Naive thymus-derived CD4-positive, alpha-beta T cell (primary cell): ENCODE measurements at regions of chr7 and their contacts with region 1.

Region 1: DNA sequence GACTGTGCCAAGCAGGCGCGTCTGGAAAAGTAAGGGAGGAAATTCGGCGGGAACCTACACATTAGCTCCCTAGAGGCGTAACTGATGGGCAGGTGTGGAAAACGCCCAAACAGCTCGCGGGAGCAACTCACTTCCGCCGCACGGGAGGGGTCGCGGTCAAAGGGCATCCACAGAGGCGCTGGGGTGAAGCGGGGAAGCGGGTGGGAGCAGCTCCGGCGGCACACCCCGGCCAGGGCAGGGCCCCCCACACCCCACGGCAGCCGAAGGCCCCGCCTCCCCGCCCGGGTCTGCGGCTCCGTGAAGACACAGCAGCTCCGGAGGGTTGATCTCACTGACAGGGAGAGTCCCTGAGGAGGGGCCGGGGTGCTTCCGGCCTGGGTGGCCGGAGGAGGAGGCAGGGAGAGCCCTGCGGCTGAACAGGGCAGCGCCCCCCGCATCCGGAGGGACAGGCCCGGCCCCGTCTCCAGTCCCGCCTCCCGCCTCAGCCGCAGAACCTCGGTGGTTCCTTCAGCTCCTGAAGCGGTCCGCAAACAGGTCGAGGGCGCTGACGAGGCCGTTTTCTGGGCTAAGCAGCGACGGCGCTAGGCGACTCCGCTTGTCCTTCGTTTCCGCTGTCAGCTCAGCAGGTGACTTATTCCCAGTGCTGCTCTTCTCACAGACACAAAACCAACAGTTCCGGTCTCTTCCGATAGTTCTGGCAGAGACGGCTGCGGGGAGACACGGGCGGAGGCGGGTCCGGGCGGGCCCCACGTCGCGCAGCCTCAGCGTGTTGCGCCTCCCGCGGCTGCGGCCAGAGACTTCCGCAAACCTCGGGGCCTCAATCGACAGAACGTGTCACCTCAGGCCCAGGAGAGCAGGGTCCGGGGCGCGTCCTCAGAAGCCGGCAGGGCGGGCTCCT is 276.1 kb downstream of the DNAJB6 start:
- DNase-seq: peak; percentile 50 to 86 (median 79)
- ATAC-seq: peak; percentile 88
- H3K4me3 ChIP-seq: peak overlapping the region; percentile 79
- H3K4me3 Mint-ChIP-seq: peak overlapping the region; percentile 76 to 93 (median 86)
- H3K27ac ChIP-seq: peak overlapping the region; percentile 63
- H3K27ac Mint-ChIP-seq: peak overlapping the region; percentile 80 to 97 (median 88)
- H3K4me1 ChIP-seq: peaks cover 0 to 8% of the 10 kb centered on the region in 2 donors
- H3K4me1 Mint-ChIP-seq: peaks cover 8 to 37% (median 23%) of the 10 kb centered on the region in 7 donors
- H3K27me3 ChIP-seq: no peaks in the 10 kb centered on the region
- H3K27me3 Mint-ChIP-seq: peaks cover 0 to 4% (median 0%) of the 10 kb centered on the region in 5 donors

Region 2: GRCh38 chr7:157576440-157576886 is 36.5 kb before region 1 on chr7:
- CTCF ChIA-PET with region 1: no interaction called
- POLR2A ChIA-PET with region 1: interaction called, 4 read pairs
- intact Hi-C with region 1: loop called (anchors 2 to 5 kb)
- DNase-seq: peak; percentile 29 to 76 (median 71)
- ATAC-seq: peak; percentile 87
- H3K4me3 ChIP-seq: peak overlapping the region; percentile 52
- H3K4me3 Mint-ChIP-seq: peak overlapping the region; percentile 73 to 88 (median 80)
- H3K27ac ChIP-seq: peak overlapping the region; percentile 69
- H3K27ac Mint-ChIP-seq: peak overlapping the region; percentile 86 to 98 (median 93)
- H3K4me1 ChIP-seq: peaks cover 5 to 12% of the 10 kb centered on the region in 2 donors
- H3K4me1 Mint-ChIP-seq: peaks cover 0 to 27% (median 19%) of the 10 kb centered on the region in 7 donors
- H3K27me3 ChIP-seq: no peaks in the 10 kb centered on the region
- H3K27me3 Mint-ChIP-seq: peaks cover 0 to 7% (median 0%) of the 10 kb centered on the region in 5 donors

Region 3: GRCh38 chr7:157668221-157668883 is 55.4 kb after region 1 on chr7:
- CTCF ChIA-PET with region 1: interaction called, 3 read pairs
- POLR2A ChIA-PET with region 1: no interaction called
- intact Hi-C with region 1: loop called in 1 of 2 experiments (anchors 5 kb)
- DNase-seq: peak in 1 of 9 donors; percentile 31
- ATAC-seq: no peak
- H3K4me3 ChIP-seq: no peak overlapping the region
- H3K4me3 Mint-ChIP-seq: peak overlapping the region in 9 of 10 donors; percentile 35 to 79 (median 60)
- H3K27ac ChIP-seq: no peak overlapping the region
- H3K27ac Mint-ChIP-seq: peak overlapping the region in 7 of 9 donors; percentile 22 to 76 (median 46)
- H3K4me1 ChIP-seq: peaks cover 0 to 27% of the 10 kb centered on the region in 2 donors
- H3K4me1 Mint-ChIP-seq: peaks cover 6 to 36% (median 27%) of the 10 kb centered on the region in 7 donors
- H3K27me3 ChIP-seq: no peaks in the 10 kb centered on the region
- H3K27me3 Mint-ChIP-seq: peaks cover 0 to 36% (median 10%) of the 10 kb centered on the region in 5 donors

Region 4: DNA sequence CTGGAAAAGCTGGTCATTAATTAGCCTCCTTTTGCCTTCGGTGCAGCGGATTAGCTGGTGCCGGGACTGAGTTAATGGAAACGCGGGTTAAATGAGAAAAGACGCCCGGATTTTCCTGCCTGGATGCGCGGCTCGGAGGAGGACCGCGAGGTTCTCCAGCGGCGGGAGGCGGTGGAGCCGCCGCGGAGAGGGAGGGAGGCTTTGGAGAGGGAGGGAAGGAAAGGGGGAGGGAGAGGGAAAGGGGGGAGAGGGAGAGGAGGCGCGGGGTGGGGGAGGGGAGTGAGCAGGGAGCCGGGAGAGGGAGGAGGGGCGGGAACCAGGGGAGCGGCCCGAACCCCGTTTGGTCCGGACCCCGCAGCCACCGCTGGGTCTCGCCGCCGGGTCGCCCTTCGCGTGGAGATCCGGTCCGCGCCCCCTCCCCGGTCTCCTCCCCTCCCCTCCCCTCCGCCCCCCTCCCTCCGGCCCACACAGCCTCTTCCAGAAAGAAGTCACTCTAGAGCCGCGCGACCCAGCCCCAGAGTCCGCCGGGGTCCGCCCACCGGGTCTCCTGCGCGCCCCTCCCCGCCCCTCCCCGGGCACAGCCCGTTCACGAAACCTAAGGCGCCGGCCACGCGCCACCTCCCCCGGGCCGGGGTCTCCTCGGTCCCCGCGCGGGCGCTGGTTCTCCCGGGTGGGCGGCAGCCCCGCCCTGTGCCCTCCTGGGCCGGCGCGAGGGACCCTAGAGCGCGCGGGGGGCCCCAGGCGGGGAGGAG is 71.4 kb after region 1 on chr7:
- CTCF ChIA-PET with region 1: interaction called, 3 read pairs
- POLR2A ChIA-PET with region 1: interaction called, 3 read pairs
- intact Hi-C with region 1: loop called in 1 of 2 experiments (anchors 2 kb)
- DNase-seq: no peak
- ATAC-seq: no peak
- H3K4me3 ChIP-seq: no peak overlapping the region
- H3K4me3 Mint-ChIP-seq: peak overlapping the region; percentile 20 to 79 (median 64)
- H3K27ac ChIP-seq: no peak overlapping the region
- H3K27ac Mint-ChIP-seq: no peak overlapping the region
- H3K4me1 ChIP-seq: peaks cover 0 to 32% of the 10 kb centered on the region in 2 donors
- H3K4me1 Mint-ChIP-seq: peaks cover 2 to 44% (median 38%) of the 10 kb centered on the region in 7 donors
- H3K27me3 ChIP-seq: peaks cover 16 to 52% of the 10 kb centered on the region in 2 donors
- H3K27me3 Mint-ChIP-seq: peaks cover 71 to 79% (median 73%) of the 10 kb centered on the region in 5 donors